WTC11 (cell line): ENCODE measurements at regions of chr14 and their contacts with region 1.

Region 1: DNA sequence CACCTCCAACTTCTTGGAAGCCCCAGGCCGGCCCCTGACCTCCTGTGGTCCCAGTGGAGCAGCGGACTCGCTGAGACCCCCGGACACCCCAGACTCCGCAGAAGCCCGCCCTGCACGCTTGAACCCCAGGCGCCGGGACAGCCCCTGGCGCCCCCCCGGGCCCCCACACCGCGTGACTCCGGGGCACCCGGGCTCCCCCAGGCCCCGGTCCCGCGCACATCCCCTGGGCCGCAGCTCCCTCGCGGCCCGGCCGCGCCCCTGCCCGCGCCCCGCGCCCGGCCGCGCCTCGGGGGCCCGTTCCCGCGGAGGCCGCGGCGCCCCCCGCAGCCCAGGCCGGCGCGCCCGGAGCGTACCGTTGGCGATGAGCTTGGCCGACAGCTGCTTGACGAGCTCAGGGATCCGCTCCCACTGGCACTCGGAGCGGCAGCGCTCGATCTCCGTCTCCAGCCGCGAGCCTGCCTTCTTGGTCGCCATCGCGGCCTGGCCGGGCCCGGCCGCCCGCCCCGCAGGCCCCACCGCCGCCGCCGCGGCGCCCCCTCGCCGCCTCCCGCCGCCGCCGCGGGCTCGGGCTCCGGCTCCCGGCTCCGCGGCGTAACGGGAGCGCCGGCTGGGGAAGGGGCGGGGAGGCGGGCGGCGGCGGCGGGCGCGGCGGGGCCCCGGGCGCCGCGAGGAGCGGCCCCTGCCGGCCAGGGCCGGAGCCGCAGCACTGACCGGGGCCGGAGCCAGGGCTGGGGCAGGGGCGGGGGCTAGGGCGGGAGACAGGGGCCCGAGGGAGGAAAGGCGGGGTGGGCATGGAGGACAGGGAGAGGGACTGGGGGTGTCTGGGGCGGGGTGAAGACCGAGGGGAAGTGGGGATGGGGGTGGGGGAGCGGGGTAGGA is at the start of gene TTC7B:
- DNase-seq: peak; percentile 64
- ATAC-seq: peak; percentile 88
- H3K4me3 Mint-ChIP-seq: peak within 1 kb of the TSS; percentile 73
- H3K27ac Mint-ChIP-seq: no peak within 1 kb of the TSS
- H3K4me1 Mint-ChIP-seq: peaks cover 6% of the 10 kb centered on the region
- H3K27me3 Mint-ChIP-seq: peaks cover 25% of the 10 kb centered on the region
- CTCF ChIP-seq: no peak
- total RNA-seq, gene TTC7B: 27.6 to 37.0 TPM (median 31.7 TPM) in 3 replicates

Region 2: DNA sequence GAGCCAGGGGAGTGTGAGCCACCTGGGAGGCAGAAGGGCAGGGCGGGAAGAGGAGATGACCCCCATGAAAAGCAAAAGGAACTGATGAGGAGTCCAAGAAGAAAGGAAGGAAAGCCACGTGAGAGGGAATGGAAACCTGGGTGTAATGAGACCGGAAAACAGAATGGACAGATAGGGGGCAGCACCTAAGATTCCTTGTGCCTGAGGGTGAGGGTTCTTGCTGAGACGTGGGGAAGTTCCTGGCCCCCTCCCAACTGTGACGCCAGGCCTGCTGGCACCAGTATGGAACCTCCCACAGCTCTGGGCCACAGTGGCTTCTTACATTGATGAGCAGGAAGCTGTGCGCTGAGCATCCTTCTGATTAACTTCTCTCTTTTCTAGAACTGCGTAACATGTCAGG is 30.6 kb before region 1 on chr14:
- CTCF ChIA-PET with region 1: interaction called, 21 read pairs
- POLR2A ChIA-PET with region 1: no interaction called
- DNase-seq: peak; percentile 33
- ATAC-seq: peak; percentile 93
- H3K4me3 Mint-ChIP-seq: no peak overlapping the region
- H3K27ac Mint-ChIP-seq: no peak overlapping the region
- H3K4me1 Mint-ChIP-seq: no peaks in the 10 kb centered on the region
- H3K27me3 Mint-ChIP-seq: no peaks in the 10 kb centered on the region
- CTCF ChIP-seq: no peak

Region 3: GRCh38 chr14:90804294-90805073 is 11.6 kb before region 1 on chr14:
- CTCF ChIA-PET with region 1: interaction called, 19 read pairs
- POLR2A ChIA-PET with region 1: no interaction called
- DNase-seq: no peak
- ATAC-seq: no peak
- H3K4me3 Mint-ChIP-seq: no peak overlapping the region
- H3K27ac Mint-ChIP-seq: peak overlapping the region; percentile 84
- H3K4me1 Mint-ChIP-seq: peaks cover 14% of the 10 kb centered on the region
- H3K27me3 Mint-ChIP-seq: no peaks in the 10 kb centered on the region
- CTCF ChIP-seq: no peak

Region 4: GRCh38 chr14:90827916-90828610 is 12.0 kb after region 1 on chr14:
- CTCF ChIA-PET with region 1: interaction called, 13 read pairs
- POLR2A ChIA-PET with region 1: no interaction called
- DNase-seq: peak; percentile 95
- ATAC-seq: peak; percentile 99
- H3K4me3 Mint-ChIP-seq: peak overlapping the region; percentile 52
- H3K27ac Mint-ChIP-seq: no peak overlapping the region
- H3K4me1 Mint-ChIP-seq: peaks cover 3% of the 10 kb centered on the region; the same call in 1 of the 2 replicates
- H3K27me3 Mint-ChIP-seq: peaks cover 80% of the 10 kb centered on the region
- CTCF ChIP-seq: no peak

Region 5: DNA sequence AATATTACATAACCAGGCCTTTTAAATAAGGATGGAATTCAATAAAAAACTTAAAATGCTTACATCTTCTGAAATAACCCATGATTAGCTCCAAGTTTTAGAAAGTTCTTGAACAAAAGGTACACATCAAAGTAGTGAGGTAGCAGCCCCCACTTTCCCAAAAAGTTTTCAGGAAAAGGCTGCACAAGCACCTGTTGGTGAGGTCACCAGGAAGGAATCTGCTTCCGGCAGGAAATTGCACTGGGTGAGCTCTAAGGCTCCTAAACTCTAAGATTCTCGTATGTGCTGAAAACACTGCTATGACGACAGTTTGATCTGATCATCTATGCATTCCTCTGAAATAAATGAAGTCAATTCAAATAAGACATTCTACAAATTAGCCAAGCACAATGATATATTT is 34.4 kb after region 1 on chr14:
- CTCF ChIA-PET with region 1: interaction called, 15 read pairs
- POLR2A ChIA-PET with region 1: no interaction called
- DNase-seq: no peak
- ATAC-seq: peak; percentile 80
- H3K4me3 Mint-ChIP-seq: no peak overlapping the region
- H3K27ac Mint-ChIP-seq: no peak overlapping the region; the same call in 1 of the 2 replicates
- H3K4me1 Mint-ChIP-seq: peaks cover 11% of the 10 kb centered on the region
- H3K27me3 Mint-ChIP-seq: no peaks in the 10 kb centered on the region
- CTCF ChIP-seq: no peak